B cell (primary cell): ENCODE measurements at regions of chr7 and their contacts with region 1.

Region 1: DNA sequence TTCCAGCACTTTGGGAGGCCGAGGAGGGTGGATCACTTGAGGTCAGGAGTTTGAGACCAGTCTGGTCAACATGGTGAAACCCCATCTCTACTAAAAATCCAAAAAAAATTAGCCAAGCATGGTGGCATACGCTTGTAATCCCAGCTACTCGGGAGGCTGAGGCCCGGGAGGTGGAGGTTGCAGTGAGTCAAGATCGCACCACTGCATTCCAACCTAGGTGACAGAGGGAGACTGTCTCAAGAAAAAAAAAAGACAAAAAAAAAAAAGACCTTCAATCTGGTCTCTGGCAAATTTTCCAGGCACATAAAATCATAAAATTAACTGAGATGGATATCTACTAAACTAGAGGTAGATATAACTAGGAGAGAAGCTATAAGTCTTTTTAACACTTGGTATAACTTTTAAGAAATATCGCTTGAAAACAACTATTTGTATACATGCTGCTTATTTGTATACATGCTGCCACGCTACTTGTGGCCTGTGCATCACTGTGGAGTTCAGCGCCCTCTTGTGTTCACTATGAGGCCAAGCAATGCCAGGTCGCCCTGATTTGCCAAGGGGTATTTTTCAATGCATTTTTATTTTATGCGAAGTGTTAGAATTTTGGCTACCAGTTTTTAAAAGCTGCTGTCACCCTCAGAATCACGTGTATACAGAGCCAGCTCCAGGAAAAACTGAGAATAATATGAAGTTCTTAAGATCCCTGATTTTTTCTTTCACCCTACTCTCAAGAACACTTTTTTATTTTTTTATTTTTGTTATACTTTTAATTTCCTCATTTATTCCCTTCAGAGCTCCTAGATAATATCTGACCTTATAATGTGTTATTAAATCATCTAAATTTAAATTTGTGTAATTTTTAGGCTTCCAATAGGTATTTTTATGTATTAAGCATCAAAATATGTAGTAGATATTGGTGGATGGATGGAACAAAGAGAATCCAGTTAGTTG is 26.7 kb downstream of the CYCS start:
- DNase-seq: peak; percentile 76
- ATAC-seq: peak; percentile 83
- H3K4me3 ChIP-seq: no peak overlapping the region
- H3K4me3 Mint-ChIP-seq: no peak overlapping the region
- H3K27ac ChIP-seq: no peak overlapping the region
- H3K27ac Mint-ChIP-seq: no peak overlapping the region
- H3K4me1 ChIP-seq: peaks cover 0 to 4% of the 10 kb centered on the region in 2 donors
- H3K4me1 Mint-ChIP-seq: peaks cover 4% of the 10 kb centered on the region
- H3K27me3 ChIP-seq: no peaks in the 10 kb centered on the region
- H3K27me3 Mint-ChIP-seq: no peaks in the 10 kb centered on the region
- CTCF ChIP-seq: peak; percentile 95

Region 2: GRCh38 chr7:25069900-25070443 is 28.4 kb before region 1 on chr7:
- CTCF ChIA-PET with region 1: interaction called, 25 read pairs
- POLR2A ChIA-PET with region 1: no interaction called
- intact Hi-C with region 1: no loop called
- DNase-seq: peak; percentile 76
- ATAC-seq: peak; percentile 51
- H3K4me3 ChIP-seq: no peak overlapping the region
- H3K4me3 Mint-ChIP-seq: no peak overlapping the region
- H3K27ac ChIP-seq: no peak overlapping the region
- H3K27ac Mint-ChIP-seq: no peak overlapping the region
- H3K4me1 ChIP-seq: peaks cover 0 to 2% of the 10 kb centered on the region in 2 donors
- H3K4me1 Mint-ChIP-seq: peaks cover 2% of the 10 kb centered on the region
- H3K27me3 ChIP-seq: no peaks in the 10 kb centered on the region
- H3K27me3 Mint-ChIP-seq: no peaks in the 10 kb centered on the region
- CTCF ChIP-seq: peak; percentile 95

Region 3: GRCh38 chr7:25087855-25088254 is 10.5 kb before region 1 on chr7:
- CTCF ChIA-PET with region 1: interaction called, 26 read pairs
- POLR2A ChIA-PET with region 1: no interaction called
- intact Hi-C with region 1: no loop called
- DNase-seq: peak; percentile 48
- ATAC-seq: peak; percentile 65
- H3K4me3 ChIP-seq: no peak overlapping the region
- H3K4me3 Mint-ChIP-seq: no peak overlapping the region
- H3K27ac ChIP-seq: no peak overlapping the region
- H3K27ac Mint-ChIP-seq: no peak overlapping the region
- H3K4me1 ChIP-seq: peaks cover 0 to 8% of the 10 kb centered on the region in 2 donors
- H3K4me1 Mint-ChIP-seq: peaks cover 10% of the 10 kb centered on the region
- H3K27me3 ChIP-seq: peaks cover 0 to 4% (median 0%) of the 10 kb centered on the region in 4 experiments
- H3K27me3 Mint-ChIP-seq: no peaks in the 10 kb centered on the region
- CTCF ChIP-seq: no peak

Region 4: GRCh38 chr7:25117226-25118047 is 19.1 kb after region 1 on chr7:
- CTCF ChIA-PET with region 1: interaction called, 55 read pairs
- POLR2A ChIA-PET with region 1: interaction called, 4 read pairs
- intact Hi-C with region 1: loop called (anchors 2 kb)
- DNase-seq: peak; percentile 81
- ATAC-seq: peak; percentile 89
- H3K4me3 ChIP-seq: peak overlapping the region; percentile 12 to 54 (median 40)
- H3K4me3 Mint-ChIP-seq: peak overlapping the region; percentile 87
- H3K27ac ChIP-seq: peak overlapping the region; percentile 71 to 82
- H3K27ac Mint-ChIP-seq: peak overlapping the region; percentile 97
- H3K4me1 ChIP-seq: peaks cover 27% of the 10 kb centered on the region in 2 donors
- H3K4me1 Mint-ChIP-seq: peaks cover 41% of the 10 kb centered on the region
- H3K27me3 ChIP-seq: no peaks in the 10 kb centered on the region
- H3K27me3 Mint-ChIP-seq: no peaks in the 10 kb centered on the region
- CTCF ChIP-seq: no peak

Region 5: DNA sequence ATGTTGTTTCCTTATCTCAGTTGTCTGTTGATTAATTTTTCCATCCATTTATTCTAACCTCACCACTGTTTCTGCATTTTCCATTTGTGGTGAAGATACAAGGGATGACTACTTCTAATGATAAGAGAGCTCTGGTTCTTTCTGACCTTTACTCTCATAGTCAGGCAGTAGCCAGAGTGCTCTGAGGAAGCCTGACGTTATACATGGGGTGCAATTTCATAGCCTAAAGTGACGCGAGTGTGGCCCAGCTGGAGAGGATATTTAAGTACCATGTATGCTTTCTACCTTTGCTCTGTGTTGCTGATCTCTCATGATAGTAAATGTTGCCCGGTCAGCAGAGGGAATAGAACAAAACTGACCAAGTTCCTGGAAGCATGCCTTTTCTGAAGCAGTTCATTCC is 60.6 kb after region 1 on chr7:
- CTCF ChIA-PET with region 1: interaction called, 13 read pairs
- POLR2A ChIA-PET with region 1: no interaction called
- intact Hi-C with region 1: loop called (anchors 1 kb)
- DNase-seq: no peak
- ATAC-seq: no peak
- H3K4me3 ChIP-seq: no peak overlapping the region
- H3K4me3 Mint-ChIP-seq: no peak overlapping the region
- H3K27ac ChIP-seq: no peak overlapping the region
- H3K27ac Mint-ChIP-seq: no peak overlapping the region
- H3K4me1 ChIP-seq: no peaks in the 10 kb centered on the region
- H3K4me1 Mint-ChIP-seq: peaks cover 1% of the 10 kb centered on the region
- H3K27me3 ChIP-seq: no peaks in the 10 kb centered on the region
- H3K27me3 Mint-ChIP-seq: no peaks in the 10 kb centered on the region
- CTCF ChIP-seq: no peak

Region 6: DNA sequence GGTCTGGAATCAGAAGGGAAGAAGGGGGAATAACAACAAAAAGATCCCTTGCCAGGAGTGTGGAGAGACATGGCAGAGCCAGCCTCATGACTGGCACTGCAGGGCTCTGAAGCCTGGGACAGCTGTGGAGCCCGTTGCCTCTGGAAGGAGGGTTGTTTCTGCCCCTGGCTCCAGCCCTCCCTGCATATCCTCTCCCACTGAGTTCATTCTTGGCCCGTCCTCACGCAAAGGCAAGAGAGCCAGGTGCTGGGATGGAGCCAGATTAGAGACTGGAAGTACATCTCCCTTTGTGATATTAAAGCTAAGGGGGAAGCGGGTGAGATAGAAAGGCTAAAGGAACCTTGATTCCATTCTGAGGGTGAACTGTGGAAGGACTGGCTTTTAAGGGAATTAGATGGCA is 271.4 kb after region 1 on chr7:
- CTCF ChIA-PET with region 1: no interaction called
- POLR2A ChIA-PET with region 1: no interaction called
- intact Hi-C with region 1: no loop called
- DNase-seq: no peak
- ATAC-seq: no peak
- H3K4me3 ChIP-seq: no peak overlapping the region
- H3K4me3 Mint-ChIP-seq: no peak overlapping the region
- H3K27ac ChIP-seq: no peak overlapping the region
- H3K27ac Mint-ChIP-seq: no peak overlapping the region
- H3K4me1 ChIP-seq: no peaks in the 10 kb centered on the region
- H3K4me1 Mint-ChIP-seq: no peaks in the 10 kb centered on the region
- H3K27me3 ChIP-seq: peaks cover 0 to 10% (median 0%) of the 10 kb centered on the region in 4 experiments
- H3K27me3 Mint-ChIP-seq: peaks cover 23% of the 10 kb centered on the region
- CTCF ChIP-seq: no peak